ENCODE measurements at regions of chr12 and their contacts with region 1.

Region 1: DNA sequence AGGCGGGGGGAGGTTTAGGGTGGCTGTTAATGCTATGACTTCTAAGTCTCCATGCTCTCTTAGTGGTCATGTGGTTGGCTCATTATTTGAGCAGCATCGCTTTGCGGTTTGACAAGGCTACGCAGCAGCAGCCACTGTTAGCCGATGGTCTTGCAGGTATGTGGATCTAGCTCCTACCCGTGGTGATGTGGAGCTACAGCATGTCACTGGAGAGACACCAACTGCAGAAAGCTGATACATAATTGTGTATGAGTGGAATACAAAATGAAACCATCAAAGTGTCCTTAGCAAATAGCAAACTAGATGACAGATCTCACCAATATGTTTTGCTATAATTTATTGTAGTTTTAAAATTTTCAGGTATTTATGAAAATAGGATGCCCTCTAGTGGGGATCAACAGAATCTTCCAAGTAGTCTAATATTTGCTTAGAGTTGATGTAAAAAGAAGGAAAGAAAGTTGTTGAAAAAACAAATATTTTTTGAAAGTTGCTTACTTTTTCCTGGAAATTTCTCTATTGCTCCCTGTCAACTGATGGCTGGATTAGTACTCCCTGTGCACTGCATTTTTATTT is 94.9 kb downstream of the NAV3 start:
- DNase-seq: peak; percentile 69
- ATAC-seq: peak; percentile 99
- H3K4me3 Mint-ChIP-seq: no peak overlapping the region
- H3K27ac Mint-ChIP-seq: no peak overlapping the region
- H3K4me1 Mint-ChIP-seq: peaks cover 21% of the 10 kb centered on the region
- H3K27me3 Mint-ChIP-seq: no peaks in the 10 kb centered on the region
- CTCF ChIP-seq: peak; percentile 86

Region 2: DNA sequence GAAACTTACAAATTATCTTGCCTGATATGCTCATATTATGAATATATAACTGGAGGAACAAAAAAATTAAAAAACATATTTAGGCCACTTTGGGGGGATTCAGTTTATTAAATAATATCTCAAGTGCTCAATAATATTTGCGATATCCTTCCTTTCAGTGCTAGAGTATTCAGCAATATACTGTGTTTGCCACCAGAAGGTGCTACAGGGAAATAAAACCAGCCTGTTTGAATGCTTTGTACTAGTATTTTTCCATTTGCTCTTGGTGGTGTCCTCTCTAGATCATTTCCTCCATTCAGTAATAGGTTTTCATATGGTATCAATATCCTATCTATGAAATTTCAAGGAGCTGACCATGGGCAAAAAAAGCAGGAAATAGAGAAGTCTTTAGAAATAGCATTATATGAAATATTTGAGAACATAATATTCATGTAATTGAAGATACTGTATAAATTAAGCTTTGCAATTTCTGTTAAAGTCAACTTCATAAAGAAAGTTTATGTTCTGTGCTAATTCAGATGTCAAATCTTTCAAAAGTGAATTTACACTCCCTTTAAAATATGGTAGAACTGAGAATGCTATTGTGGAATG is 201.2 kb before region 1 on chr12:
- CTCF ChIA-PET with region 1: interaction called, 35 read pairs
- POLR2A ChIA-PET with region 1: interaction called, 3 read pairs
- DNase-seq: no peak
- ATAC-seq: peak; percentile 67
- H3K4me3 Mint-ChIP-seq: no peak overlapping the region
- H3K27ac Mint-ChIP-seq: no peak overlapping the region
- H3K4me1 Mint-ChIP-seq: peaks cover 3% of the 10 kb centered on the region; the same call in 1 of the 2 replicates
- H3K27me3 Mint-ChIP-seq: no peaks in the 10 kb centered on the region
- CTCF ChIP-seq: no peak

Region 3: GRCh38 chr12:77893918-77894317 is 31.7 kb before region 1 on chr12:
- CTCF ChIA-PET with region 1: interaction called, 16 read pairs
- POLR2A ChIA-PET with region 1: no interaction called
- DNase-seq: no peak
- ATAC-seq: peak; percentile 50
- H3K4me3 Mint-ChIP-seq: no peak overlapping the region; the same call in 1 of the 2 replicates
- H3K27ac Mint-ChIP-seq: peak overlapping the region; percentile 70
- H3K4me1 Mint-ChIP-seq: peaks cover 17% of the 10 kb centered on the region
- H3K27me3 Mint-ChIP-seq: no peaks in the 10 kb centered on the region
- CTCF ChIP-seq: no peak

Region 4: DNA sequence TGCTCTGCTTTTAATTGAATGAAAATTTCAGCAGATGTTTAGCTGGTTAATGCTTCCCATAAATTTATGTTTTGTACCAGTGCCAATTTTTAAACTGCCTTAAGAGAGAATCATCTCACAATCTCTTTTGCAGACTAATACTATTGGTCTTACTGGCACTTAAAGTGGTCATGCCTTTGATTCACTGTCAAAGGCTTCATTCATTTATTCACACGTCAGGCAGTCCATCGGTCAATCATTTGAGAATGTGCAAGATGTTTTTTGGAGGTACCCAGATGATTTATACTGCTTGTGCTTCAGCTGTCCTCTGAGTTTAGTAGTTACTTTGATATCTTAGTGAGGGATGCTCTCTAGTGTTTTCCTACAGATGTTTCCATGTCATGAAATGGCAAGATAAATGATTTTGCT is 11.5 kb before region 1 on chr12:
- CTCF ChIA-PET with region 1: interaction called, 11 read pairs
- POLR2A ChIA-PET with region 1: no interaction called
- DNase-seq: no peak
- ATAC-seq: no peak
- H3K4me3 Mint-ChIP-seq: no peak overlapping the region
- H3K27ac Mint-ChIP-seq: no peak overlapping the region
- H3K4me1 Mint-ChIP-seq: peaks cover 15% of the 10 kb centered on the region
- H3K27me3 Mint-ChIP-seq: no peaks in the 10 kb centered on the region
- CTCF ChIP-seq: no peak

Region 5: DNA sequence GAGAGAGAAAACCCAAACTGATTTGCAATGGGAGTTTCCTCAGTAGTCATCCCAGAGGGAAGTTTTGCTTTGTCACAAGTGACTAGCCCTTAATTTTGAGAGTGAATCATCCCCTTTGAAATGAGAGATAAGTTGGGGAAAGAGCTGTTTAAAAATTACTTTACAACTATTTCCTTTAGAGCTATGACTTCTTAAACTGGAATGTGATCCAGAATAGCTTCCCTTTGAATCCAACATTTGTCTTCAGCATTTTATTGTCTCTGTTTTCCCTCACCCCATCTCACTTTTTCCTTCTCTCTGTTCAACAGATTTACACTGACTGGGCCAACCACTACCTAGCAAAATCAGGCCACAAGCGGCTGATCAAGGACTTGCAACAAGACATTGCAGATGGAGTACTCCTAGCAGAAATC is 14.4 kb after region 1 on chr12:
- CTCF ChIA-PET with region 1: interaction called, 13 read pairs
- POLR2A ChIA-PET with region 1: no interaction called
- DNase-seq: no peak
- ATAC-seq: peak; percentile 36; the same call in 1 of the 2 replicates
- H3K4me3 Mint-ChIP-seq: no peak overlapping the region
- H3K27ac Mint-ChIP-seq: no peak overlapping the region
- H3K4me1 Mint-ChIP-seq: peaks cover 7% of the 10 kb centered on the region; the same call in 1 of the 2 replicates
- H3K27me3 Mint-ChIP-seq: no peaks in the 10 kb centered on the region
- CTCF ChIP-seq: no peak

Region 6: DNA sequence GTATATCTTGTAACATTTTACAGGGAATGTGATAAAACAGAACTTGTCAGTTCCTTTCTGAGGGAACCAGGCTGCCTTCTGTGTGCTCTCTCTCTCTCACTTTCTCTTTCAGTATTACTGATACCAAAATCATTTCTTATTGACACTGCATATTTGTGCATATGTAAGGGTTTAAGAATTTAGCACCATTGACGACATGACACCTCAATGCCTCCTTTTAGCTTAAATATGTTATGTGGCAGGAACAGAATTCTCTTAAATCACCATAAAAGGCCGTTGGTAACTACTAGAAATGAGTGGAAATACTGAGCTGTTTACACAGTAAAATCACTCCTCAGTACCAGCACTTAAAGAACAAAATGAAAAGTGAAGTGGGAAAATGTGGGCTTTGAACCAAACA is 481.2 kb after region 1 on chr12:
- CTCF ChIA-PET with region 1: no interaction called
- POLR2A ChIA-PET with region 1: no interaction called
- DNase-seq: no peak
- ATAC-seq: no peak
- H3K4me3 Mint-ChIP-seq: no peak overlapping the region
- H3K27ac Mint-ChIP-seq: peak overlapping the region; percentile 77; the same call in 1 of the 2 replicates
- H3K4me1 Mint-ChIP-seq: peaks cover 36% of the 10 kb centered on the region
- H3K27me3 Mint-ChIP-seq: peaks cover 2% of the 10 kb centered on the region; the same call in 1 of the 2 replicates
- CTCF ChIP-seq: no peak